ENCODE measurements at regions of chr1 and their contacts with region 1.

Region 1: DNA sequence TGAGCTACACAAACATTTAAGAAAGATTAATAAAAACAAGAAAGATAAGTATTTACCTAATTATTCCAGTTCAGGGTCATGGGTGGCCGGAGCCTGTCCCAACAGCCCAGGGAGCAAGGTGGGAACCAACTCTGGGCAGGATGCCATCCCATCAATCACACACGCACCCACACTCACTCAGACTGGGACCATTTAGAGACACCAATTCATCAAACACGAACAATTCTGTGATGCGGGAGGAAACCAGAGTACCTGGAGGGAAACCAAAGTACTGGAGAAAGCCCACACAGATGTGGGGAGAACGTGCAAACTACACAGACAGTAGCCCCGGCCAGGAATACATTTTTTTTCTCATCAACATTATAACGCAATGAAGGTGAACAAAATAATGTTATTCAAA is 16.2 kb downstream of the WASF2 start:
- DNase-seq: no peak
- H3K4me3 ChIP-seq: no peak overlapping the region
- H3K27ac ChIP-seq: peak overlapping the region in 6 of 8 donors; percentile 2 to 42 (median 8)
- H3K4me1 ChIP-seq: peaks cover 36 to 98% (median 90%) of the 10 kb centered on the region in 6 donors
- H3K27me3 ChIP-seq: no peaks in the 10 kb centered on the region
- CTCF ChIP-seq: no peak
- POLR2A ChIP-seq: no peak

Region 2: DNA sequence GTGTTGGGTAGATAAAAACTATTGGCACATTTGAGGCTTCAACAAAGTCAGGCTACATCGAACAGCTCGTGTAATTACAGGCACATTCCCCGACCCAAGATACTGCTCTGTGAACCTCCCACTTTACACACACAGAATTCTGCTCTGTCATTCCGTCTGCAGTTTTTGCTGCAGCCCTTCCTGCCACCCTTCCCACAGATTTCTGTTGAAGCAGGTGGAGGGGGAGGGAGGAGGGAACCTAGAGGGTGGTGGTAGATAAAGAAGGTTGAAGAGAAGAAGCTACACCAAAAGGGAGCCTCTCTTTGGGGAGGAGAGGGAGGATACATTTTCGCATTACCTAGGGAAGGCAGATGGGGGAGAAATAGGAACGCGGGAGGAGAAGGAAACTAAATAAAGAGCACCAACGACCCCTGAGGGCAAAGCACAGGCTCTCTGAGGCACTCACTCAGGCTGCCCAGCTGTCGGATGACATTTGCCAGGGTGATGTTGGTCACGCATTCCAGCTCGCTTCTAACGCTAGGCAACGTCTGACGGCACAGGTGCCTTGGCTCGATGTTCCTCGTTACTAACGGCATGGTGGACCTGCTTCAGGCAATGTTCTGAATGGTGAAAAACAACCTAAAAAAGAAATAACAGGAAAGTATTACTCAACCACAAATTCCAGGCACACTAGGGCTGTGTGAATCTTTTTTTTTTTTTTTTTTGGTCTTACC is 45.3 kb before region 1 on chr1:
- intact Hi-C with region 1: loop called (anchors 10 kb)
- DNase-seq: no peak
- H3K4me3 ChIP-seq: peak overlapping the region in 4 of 8 donors; percentile 17 to 45 (median 19)
- H3K27ac ChIP-seq: peak overlapping the region; percentile 39 to 90 (median 74)
- H3K4me1 ChIP-seq: peaks cover 58 to 100% (median 88%) of the 10 kb centered on the region in 6 donors
- H3K27me3 ChIP-seq: no peaks in the 10 kb centered on the region
- CTCF ChIP-seq: no peak
- POLR2A ChIP-seq: no peak

Region 3: DNA sequence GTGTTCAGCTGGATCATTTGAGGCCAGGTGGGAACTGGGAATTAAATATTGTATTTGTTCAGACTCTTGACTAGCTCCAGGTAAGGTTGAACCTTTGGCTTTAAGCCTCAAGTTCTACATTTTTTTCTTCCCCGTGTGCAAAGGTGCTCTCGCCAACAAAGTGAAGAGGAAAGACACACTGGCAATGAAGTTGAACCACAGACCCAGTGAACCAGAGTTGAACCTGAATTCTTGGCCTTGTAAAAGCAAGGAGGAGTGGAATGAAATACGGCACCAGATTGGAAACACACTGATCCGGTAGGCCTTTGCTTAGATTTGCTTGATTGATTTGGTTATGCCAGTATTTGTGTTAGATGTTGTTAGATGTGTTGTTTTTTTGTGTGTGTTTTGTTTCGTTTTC is 1006.6 kb after region 1 on chr1:
- intact Hi-C with region 1: no loop called
- DNase-seq: no peak
- H3K4me3 ChIP-seq: no peak overlapping the region
- H3K27ac ChIP-seq: no peak overlapping the region
- H3K4me1 ChIP-seq: no peaks in the 10 kb centered on the region
- H3K27me3 ChIP-seq: no peaks in the 10 kb centered on the region
- CTCF ChIP-seq: no peak
- POLR2A ChIP-seq: no peak